KBM-7 (cell line): ENCODE measurements at regions of chr5 and their contacts with region 1.

Region 1: GRCh38 chr5:133287500-133287899 is 235.7 kb downstream of the HSPA4 start:
- DNase-seq: peak; percentile 38

Region 2: DNA sequence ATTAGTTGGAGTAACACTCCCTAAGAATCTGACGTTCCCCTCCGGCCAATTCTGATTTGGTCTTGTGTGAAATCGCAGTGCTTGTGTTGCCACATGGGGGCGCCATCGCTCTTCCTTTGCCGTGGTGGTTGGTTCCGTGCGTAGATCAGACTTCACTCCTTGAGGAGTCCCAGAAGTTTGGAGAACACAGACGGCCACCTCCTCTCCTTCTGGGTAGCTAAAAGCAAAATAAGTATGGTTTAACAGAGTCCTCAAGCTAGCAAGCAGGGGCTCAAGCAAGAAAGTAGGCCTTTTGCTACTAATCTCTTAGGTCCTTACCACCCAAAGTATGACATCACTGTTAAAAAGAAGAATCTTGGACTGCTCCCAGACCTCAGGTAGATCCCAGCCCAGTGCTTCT is 176.2 kb before region 1 on chr5:
- in situ Hi-C with region 1: loop called (anchors 25 kb)
- DNase-seq: peak; percentile 77